ENCODE measurements at regions of chr9 and their contacts with region 1.

Region 1: DNA sequence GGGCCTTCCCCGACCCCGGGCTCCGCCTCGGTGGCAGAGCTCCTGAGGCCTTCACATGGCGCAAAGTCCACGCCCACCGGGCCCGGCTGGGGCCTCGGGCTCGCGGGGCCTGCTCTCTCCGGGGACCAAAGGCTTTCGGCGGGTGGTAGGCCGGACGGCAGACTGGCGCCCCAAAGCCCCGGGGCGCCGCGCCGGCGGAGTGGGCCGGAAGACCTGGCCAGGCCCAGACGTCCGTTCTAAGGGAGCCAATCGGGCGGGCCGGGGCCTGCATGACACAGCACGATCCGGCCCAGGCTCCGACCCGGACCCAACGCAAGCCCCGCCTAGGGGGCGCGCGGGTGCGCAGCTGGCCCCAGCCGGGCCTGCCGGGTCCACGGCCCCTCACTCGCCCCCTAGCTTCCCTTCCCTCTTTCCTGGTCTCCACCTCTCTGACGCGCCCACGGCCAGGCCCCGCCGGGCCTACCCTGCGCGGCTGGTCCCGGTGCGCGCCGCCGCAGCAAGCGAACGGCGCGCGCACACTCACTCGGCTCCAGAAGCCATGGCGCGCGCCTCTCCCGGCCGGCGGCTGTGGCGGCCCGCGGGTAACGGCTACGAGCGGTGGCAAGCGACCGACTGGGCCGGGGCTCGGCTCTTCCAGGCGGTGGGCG is 488 bp downstream of the VCP start:
- DNase-seq: peak; percentile 79
- H3K4me3 Mint-ChIP-seq: peak overlapping the region; percentile 89
- H3K27ac Mint-ChIP-seq: peak overlapping the region; percentile 95
- H3K4me1 Mint-ChIP-seq: peaks cover 71% of the 10 kb centered on the region
- H3K27me3 Mint-ChIP-seq: no peaks in the 10 kb centered on the region

Region 2: DNA sequence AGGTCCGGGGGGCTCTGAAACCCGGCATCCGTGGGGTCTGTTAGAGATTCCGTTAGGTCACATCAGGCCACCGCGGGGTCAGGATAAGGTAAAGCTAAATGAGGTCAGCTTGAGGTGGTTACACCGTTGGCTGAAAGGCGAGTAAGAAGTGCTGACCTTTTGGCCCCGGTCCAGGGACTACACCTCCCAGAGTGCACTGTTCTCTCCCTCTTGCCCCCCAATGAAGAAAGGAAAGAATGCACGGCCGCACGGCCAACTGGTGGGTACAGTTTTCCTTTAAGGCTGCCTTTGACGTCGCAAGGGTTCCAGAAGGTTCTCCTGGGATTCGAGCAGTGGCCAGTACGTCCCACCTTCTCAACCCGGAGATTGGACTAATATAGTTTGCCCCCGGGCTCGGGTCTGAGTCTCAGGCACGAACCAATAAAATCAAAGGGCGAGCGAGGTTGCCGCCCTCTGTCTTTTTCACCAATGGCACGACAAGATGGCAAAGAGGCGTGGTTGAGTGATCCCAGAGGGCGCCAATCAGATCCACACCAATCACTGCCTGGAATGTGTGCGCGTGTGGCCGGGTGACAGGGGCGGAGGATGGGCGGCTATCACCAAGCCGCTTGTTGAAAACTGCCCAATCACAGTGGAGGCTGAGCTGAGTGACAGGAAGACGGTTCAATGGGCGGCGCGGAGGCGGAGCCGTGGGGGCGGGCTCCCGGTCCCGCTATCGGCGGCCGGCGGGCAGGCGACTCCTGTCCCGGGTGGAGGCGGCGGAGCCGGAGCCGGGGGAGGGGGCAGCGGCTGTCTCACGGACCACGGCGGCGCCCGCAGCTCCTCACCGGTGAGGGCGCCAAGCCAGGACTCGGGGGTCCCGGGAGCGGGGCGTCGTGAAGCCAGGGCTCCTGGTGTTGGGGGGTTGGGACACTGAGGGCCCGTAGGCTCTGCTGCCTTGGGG is 82.7 kb before region 1 on chr9 and contains the start of gene DNAJB5:
- CTCF ChIA-PET with region 1: interaction called, 3 read pairs
- POLR2A ChIA-PET with region 1: interaction called, 10 read pairs
- DNase-seq: peak; percentile 98
- H3K4me3 Mint-ChIP-seq: peak within 1 kb of the TSS; percentile 81
- H3K27ac Mint-ChIP-seq: peak within 1 kb of the TSS; percentile 76
- H3K4me1 Mint-ChIP-seq: peaks cover 59% of the 10 kb centered on the region
- H3K27me3 Mint-ChIP-seq: no peaks in the 10 kb centered on the region
- total RNA-seq, gene DNAJB5: 3.2 to 4.1 TPM

Region 3: GRCh38 chr9:35051069-35051967 is 20.6 kb before region 1 on chr9:
- CTCF ChIA-PET with region 1: interaction called, 28 read pairs
- POLR2A ChIA-PET with region 1: interaction called, 21 read pairs
- DNase-seq: peak; percentile 49
- H3K4me3 Mint-ChIP-seq: no peak overlapping the region
- H3K27ac Mint-ChIP-seq: no peak overlapping the region
- H3K4me1 Mint-ChIP-seq: no peaks in the 10 kb centered on the region
- H3K27me3 Mint-ChIP-seq: no peaks in the 10 kb centered on the region

Region 4: DNA sequence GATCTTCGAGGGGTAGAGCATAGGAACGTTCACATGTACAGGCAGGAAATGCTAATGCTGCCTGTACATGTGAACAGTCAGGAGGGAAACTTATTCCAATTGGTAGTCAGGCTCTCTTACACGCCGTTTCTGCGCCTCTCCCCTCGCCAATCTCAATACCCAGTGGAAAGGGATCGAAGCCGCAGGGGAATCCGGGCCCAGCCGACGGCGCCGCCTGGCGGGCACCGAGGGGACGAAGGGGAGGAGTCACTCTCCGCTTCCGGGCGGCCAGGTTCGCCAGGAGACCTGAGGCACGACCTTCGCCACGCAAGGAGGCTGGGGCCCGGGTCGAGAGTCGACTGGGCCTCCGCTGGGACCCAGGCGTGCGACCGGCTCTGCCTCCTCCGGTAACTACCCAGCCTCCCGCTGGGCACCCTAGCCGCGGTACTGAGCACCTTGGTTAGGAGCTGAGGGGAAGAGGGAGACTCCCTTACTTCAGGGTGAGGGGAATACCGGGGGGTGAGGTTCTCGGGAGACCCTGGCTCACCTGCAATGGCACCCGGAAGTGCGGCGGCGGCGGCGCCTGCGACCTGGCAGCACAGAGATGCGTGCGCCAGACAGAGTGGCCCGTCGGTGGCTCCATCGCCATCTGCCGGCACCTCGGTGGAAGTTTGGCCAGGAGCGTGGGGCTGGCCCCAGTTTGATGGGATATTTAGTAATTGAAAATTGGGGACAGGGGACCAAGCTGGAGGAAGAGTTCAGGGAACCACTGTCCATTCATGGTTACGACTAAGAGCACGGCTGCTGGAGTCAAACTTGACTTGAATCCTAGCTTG is 24.3 kb after region 1 on chr9 and contains the start of gene PIGO:
- CTCF ChIA-PET with region 1: interaction called, 6 read pairs
- POLR2A ChIA-PET with region 1: interaction called, 132 read pairs
- DNase-seq: peak; percentile 89
- H3K4me3 Mint-ChIP-seq: peak within 1 kb of the TSS; percentile 82
- H3K27ac Mint-ChIP-seq: peak within 1 kb of the TSS; percentile 86
- H3K4me1 Mint-ChIP-seq: peaks cover 44% of the 10 kb centered on the region
- H3K27me3 Mint-ChIP-seq: no peaks in the 10 kb centered on the region
- total RNA-seq, gene PIGO: 22.8 to 28.6 TPM

Region 5: DNA sequence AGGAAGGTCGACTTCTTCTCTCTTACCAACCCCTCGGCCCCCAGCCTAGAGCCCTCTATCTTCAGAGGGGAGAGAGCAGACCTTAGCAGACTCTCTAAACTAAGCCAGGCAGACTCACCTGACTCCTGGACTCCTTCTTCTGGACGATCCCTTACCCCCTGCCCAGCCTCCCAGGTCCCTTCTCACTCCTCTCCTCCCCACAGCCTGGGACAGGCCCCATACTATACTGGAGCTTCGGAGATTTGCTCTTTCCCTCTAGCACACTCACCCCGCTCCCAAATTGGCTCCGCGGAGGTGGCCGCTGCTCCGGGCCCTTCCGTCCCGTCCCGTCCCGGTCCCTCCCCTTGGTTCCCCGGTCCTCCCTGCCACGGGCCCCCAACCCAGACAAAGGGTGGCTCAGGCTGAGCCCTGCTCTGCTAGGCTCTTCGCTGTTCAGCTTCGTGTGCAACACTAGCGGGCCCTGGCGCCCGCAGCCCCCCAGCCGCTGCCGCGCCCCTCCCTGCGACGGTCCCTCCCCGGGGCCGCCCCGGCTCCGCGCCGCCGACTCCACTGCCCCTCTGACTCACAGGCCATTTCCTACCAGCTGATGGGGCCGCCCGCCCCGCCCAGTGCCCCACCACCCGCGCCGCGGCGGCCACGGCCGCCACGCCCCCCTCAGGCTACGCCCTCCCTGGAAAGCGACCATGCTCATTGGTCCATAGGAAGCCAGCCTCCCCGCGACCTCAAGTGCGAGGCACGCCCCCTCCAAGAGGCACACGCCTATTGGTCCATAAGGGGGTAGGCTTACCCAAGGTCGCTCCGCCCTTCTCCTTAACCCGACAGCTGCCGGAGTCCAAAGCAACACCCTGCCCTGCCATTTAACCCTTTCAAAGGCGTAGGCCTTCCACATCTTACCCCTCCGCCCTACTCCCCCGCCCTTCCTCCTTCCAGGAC is 39.3 kb after region 1 on chr9:
- CTCF ChIA-PET with region 1: interaction called, 10 read pairs
- POLR2A ChIA-PET with region 1: interaction called, 38 read pairs
- DNase-seq: peak; percentile 97
- H3K4me3 Mint-ChIP-seq: peak overlapping the region; percentile 73
- H3K27ac Mint-ChIP-seq: peak overlapping the region; percentile 79
- H3K4me1 Mint-ChIP-seq: peaks cover 54% of the 10 kb centered on the region
- H3K27me3 Mint-ChIP-seq: no peaks in the 10 kb centered on the region

Region 6: GRCh38 chr9:35367451-35367850 is 295.5 kb after region 1 on chr9:
- CTCF ChIA-PET with region 1: no interaction called
- POLR2A ChIA-PET with region 1: no interaction called
- DNase-seq: no peak
- H3K4me3 Mint-ChIP-seq: no peak overlapping the region
- H3K27ac Mint-ChIP-seq: no peak overlapping the region
- H3K4me1 Mint-ChIP-seq: no peaks in the 10 kb centered on the region
- H3K27me3 Mint-ChIP-seq: no peaks in the 10 kb centered on the region

Measured in activated CD4-positive, alpha-beta memory T cell treated with anti-CD3 and anti-CD28 coated beads, Interleukin-2, amount 10 ng/mL, durations not matched to agents 7 days and 5 days (primary cell).